ENCODE measurements at regions of chr19 and their contacts with region 1.

Region 1: GRCh38 chr19:4951656-4952055 is 17.3 kb upstream of the KDM4B start:
- DNase-seq: no peak
- H3K4me3 ChIP-seq: no peak overlapping the region
- H3K27ac ChIP-seq: no peak overlapping the region
- H3K4me1 ChIP-seq: no peaks in the 10 kb centered on the region
- H3K27me3 ChIP-seq: no peaks in the 10 kb centered on the region
- CTCF ChIP-seq: no peak

Region 2: DNA sequence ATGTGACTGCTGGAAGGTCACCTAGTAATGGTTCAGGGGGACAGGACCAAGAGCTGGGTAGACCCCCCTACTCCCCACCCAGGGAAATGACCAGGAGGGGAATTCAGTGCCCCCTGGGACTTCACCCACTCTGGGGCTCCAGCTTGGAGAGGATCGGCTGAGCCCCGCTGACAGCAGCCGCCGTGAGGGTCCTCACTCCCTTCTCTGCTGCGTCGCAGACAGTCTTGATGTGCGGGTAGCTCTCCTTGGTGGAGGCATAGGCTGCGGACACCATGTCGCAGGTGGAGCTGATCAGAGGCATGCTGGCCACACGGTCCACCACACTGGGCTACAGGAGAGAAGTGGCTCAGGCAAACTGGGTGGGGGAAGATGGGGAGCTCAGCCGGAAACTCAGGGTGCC is 92.0 kb before region 1 on chr19:
- CTCF ChIA-PET with region 1: no interaction called
- dilution Hi-C with region 1: loop called (anchors 5 kb)
- in situ Hi-C with region 1: no loop called
- intact Hi-C with region 1: no loop called
- DNase-seq: no peak
- H3K4me3 ChIP-seq: no peak overlapping the region
- H3K27ac ChIP-seq: no peak overlapping the region
- H3K4me1 ChIP-seq: no peaks in the 10 kb centered on the region
- H3K27me3 ChIP-seq: no peaks in the 10 kb centered on the region
- CTCF ChIP-seq: no peak

Region 3: DNA sequence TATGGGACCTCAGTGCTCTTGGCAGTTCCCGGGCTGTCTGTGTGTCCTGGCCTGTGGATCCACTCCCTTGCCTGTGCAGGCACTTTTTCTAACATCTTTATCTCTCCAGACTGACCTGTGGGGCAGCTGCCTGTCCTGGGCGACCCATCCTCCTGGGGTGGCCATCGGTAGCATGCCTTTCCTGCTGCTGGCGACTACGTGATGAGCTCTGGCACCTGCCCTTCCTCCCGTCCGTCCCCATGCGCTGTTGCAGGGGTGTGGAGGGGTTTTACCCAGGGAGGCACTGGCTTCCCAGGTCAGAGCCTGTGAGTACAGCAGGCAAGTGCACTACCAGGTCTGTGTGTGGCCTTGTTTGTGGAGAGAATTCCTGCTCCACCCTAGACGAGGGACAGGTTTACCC is 110.5 kb after region 1 on chr19:
- CTCF ChIA-PET with region 1: no interaction called
- dilution Hi-C with region 1: no loop called
- in situ Hi-C with region 1: no loop called
- intact Hi-C with region 1: no loop called
- DNase-seq: no peak
- H3K4me3 ChIP-seq: no peak overlapping the region
- H3K27ac ChIP-seq: no peak overlapping the region
- H3K4me1 ChIP-seq: peaks cover 12% of the 10 kb centered on the region
- H3K27me3 ChIP-seq: no peaks in the 10 kb centered on the region
- CTCF ChIP-seq: no peak